Posterior vena cava (tissue), 2 donors: ENCODE measurements at regions of chr1 and their contacts with region 1.

Region 1: DNA sequence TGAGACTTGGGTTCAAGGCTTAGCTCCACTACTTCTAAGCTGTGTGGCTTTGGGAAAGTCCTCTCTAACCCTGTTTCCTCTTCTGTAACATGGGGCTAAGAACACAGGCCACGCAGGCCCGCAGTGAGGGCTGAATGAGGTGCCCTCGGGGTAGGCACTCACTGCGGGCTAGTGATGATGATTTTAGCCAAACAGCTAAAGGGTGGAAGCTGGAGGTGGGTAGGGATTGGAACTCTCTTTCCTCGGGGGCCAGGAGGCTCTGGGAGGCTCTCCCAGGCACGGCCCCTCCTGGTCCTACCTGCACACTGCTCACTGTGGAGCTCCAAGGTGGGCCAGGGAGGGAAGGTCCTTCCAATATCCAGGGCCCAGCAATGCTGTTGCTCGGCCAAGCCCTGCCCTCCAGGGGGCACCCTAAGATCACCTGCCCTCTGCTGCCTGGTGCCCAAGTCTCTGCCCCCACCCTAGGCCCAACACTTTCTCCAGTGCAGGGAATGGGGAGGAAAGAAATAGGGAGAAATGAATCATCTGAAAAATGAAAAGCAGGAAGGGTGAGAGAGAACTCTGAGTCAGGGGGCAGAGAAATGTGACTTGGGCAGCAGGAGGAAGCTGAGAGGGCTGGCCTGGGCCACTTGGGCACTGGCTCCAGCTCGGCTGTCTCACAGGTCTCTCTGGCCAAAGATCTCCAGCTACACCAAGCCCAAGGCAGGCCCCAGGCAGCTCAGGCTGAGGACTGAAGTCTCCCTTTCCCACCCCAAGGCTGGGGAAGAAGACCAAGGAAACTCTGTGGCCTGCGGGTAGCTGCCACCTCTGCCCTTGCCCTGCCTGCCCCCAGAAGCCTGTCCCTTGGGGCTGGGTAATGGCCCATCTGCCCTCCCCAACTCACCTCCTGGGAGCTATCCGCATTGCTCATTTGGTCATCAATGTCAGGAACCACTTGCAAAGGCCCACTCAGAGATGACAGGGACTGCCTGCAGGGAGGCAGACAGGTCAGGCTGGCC is 19.3 kb upstream of the EVA1B start:
- DNase-seq: no peak

Region 2: GRCh38 chr1:35461966-35462651 is 880.7 kb before region 1 on chr1:
- intact Hi-C with region 1: no loop called
- DNase-seq: no peak

Region 3: DNA sequence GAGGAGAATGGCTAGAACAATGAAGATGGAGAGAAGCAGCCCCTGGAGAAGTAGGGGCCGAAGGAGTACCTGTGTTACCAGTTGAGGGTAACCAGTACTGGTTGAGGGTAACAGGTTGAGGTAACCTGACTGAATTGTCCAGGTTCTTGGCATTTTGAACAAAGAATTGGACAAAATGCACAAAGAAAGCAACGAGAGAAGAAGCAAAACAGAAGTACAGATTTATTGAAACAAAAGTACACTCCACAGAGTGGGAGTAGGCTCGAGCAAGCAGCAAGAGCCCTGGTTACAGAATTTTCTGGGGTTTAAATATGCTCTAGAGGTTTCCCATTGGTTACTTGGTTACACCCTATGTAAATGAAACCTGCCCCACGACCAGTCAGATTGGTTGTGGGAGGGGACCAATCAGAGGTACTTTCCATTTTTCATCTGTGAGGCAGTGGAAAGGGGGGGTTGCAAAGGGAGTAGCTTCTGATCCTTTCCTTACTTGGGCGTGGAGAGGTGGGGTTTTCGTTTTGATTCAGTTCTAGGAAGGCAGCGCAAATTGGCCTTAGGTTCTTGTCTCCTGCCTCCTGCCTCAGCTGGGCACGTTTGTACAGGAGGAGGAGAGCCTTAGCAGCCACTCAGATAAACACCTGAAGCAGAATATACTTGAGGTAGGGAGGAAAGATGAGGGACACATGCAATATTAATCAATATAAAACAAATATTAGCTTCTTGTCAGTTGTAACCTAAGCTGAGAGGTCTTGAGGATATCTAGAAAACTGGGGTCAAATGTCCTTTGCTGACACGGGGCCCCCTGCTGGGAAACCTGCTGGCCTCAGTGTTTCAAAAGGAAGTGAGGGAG is 69.1 kb after region 1 on chr1:
- intact Hi-C with region 1: loop called in 1 of 2 experiments (anchors 5 kb)
- DNase-seq: no peak

Region 4: DNA sequence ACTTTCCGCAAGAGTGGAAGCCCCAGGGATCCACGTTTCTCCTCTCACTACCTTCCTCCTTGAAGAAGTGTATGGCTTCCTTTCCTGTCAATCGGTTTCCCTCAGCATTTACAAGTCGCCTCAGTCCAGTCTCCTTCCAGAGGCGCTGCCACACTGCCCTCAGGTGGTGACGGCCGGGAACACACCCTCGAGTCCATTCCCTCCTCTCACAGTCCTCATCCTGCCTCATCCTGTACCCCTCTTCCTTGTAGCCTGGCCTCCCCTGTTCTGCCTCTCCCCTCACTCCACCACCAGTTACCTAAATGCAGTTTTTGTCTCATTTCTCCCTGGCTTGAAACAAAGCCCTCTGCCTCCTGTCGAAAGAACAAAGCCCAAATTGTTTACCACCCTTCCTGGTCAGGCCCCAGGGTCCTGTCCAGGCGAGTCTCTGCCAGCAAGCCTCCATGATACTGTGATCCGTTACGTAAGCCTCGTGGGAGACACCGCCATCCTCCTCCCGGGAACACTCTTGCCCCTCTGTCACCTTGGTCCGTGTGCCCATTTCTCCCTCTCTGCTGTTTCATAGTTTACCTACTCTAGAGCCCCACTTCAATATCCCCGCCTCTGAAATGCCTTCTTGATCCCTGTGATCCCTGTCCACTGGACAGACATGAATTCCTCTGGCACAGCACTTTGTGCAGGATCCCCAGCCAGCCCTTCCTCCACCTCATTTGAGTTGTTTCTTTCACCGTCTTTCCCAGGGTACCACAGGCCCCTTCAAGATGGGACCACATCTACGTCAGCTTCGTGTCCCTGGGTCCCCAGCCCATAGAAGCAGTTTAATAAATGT is 78.3 kb after region 1 on chr1:
- intact Hi-C with region 1: loop called in 1 of 2 experiments (anchors 2 kb)
- DNase-seq: peak; percentile 96

Region 5: GRCh38 chr1:37274938-37275631 is 932.3 kb after region 1 on chr1:
- intact Hi-C with region 1: loop called in 1 of 2 experiments (anchors 5 kb)
- DNase-seq: no peak